Endothelial cell of umbilical vein (primary cell): ENCODE measurements at regions of chrX and their contacts with region 1.

Region 1: GRCh38 chrX:49073601-49074571 is at the start of gene PRAF2:
- DNase-seq: peak; percentile 91
- H3K4me3 ChIP-seq: peak within 1 kb of the TSS; percentile 37 to 85 (median 63)
- H3K27ac ChIP-seq: peak within 1 kb of the TSS; percentile 48
- H3K4me1 ChIP-seq: peaks cover 9% of the 10 kb centered on the region
- H3K27me3 ChIP-seq: no peaks in the 10 kb centered on the region
- CTCF ChIP-seq: no peak
- POLR2A ChIP-seq: peak; percentile 65
- total RNA-seq, gene PRAF2: 41.6 and 45.4 TPM in 2 replicates

Region 2: DNA sequence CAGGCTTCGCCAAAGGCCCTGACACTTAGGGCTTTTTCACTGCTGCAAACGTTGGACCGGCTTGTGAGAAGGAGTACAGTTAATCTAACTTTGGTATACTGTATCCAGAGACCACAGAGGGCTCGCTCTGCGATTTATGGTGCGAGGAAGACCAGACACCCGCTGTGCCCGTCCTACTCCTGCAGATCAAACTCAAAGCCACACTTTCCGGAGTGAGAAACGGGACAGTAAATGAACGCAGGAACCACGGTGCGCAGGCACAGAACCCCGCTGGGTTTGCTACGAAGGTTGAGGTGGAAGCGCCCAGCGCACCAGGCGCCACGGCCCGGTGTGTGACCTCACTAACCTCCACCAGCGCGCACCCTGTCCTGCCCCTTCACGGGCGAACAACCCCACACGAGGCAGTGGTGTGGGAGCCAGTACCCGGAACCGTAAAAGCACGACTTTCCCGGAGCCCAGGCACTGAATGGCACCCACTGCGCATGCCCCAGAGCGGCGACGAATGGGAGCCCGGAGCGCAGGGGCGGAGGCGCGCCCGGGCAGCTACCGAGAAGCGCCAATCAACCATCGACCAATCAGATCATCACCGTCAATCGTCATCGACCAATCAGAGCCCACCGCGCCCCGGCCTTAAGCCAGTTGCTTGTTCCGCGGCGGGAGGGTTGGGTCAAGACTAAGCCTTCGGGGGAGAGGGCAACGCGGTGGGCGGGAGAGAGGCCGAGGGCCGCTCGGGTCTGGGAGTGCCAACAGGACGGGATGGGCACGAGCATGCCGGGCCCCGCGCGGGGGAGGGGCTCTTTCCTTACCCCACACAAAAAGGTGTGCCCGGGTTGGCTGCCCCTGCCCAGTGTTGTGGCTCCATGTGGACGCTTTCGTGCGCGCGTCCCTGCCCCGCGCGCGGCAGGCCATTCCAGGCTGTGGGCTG is 27.1 kb after region 1 on chrX:
- CTCF ChIA-PET with region 1: interaction called, 5 read pairs
- POLR2A ChIA-PET with region 1: no interaction called
- dilution Hi-C with region 1: no loop called
- intact Hi-C with region 1: loop called (anchors 2 kb)
- DNase-seq: peak; percentile 94
- H3K4me3 ChIP-seq: peak overlapping the region; percentile 35 to 54 (median 50)
- H3K27ac ChIP-seq: no peak overlapping the region
- H3K4me1 ChIP-seq: no peaks in the 10 kb centered on the region
- H3K27me3 ChIP-seq: no peaks in the 10 kb centered on the region
- CTCF ChIP-seq: no peak
- POLR2A ChIP-seq: peak; percentile 39

Region 3: DNA sequence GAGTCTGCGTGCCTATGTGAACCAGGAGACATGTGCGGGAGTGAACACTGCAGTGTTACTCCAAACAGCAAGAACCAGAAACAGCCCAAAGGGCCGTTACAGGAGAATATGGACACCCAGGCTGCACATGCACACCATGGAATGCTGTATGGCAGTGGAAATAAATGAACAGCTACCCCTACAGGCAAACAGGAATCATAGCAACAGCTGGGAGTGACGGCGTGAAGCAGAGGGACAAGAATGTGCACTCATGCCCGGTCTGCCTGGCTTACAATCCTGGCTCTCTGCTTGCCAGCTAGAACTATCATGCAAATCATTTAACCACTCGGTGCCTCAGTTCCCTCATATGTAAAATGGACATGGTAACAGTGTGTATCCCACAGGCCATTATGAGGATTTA is 33.0 kb after region 1 on chrX:
- CTCF ChIA-PET with region 1: interaction called, 5 read pairs
- POLR2A ChIA-PET with region 1: interaction called, 10 read pairs
- dilution Hi-C with region 1: no loop called
- intact Hi-C with region 1: no loop called
- DNase-seq: peak; percentile 44
- H3K4me3 ChIP-seq: no peak overlapping the region
- H3K27ac ChIP-seq: no peak overlapping the region
- H3K4me1 ChIP-seq: no peaks in the 10 kb centered on the region
- H3K27me3 ChIP-seq: no peaks in the 10 kb centered on the region
- CTCF ChIP-seq: peak; percentile 42 to 51
- POLR2A ChIP-seq: no peak

Region 4: GRCh38 chrX:49754233-49754857 is 680.5 kb after region 1 on chrX:
- CTCF ChIA-PET with region 1: no interaction called
- POLR2A ChIA-PET with region 1: no interaction called
- dilution Hi-C with region 1: no loop called
- intact Hi-C with region 1: loop called (anchors 10 kb)
- DNase-seq: peak; percentile 32
- H3K4me3 ChIP-seq: no peak overlapping the region
- H3K27ac ChIP-seq: no peak overlapping the region
- H3K4me1 ChIP-seq: no peaks in the 10 kb centered on the region
- H3K27me3 ChIP-seq: peaks cover 0 to 3% of the 10 kb centered on the region in 2 experiments
- CTCF ChIP-seq: peak; percentile 59 to 71
- POLR2A ChIP-seq: no peak